Posterior vena cava (tissue), 2 donors: ENCODE measurements at regions of chr15 and their contacts with region 1.

Region 1: GRCh38 chr15:79028411-79028964 is 62.1 kb downstream of the RASGRF1 start:
- DNase-seq: peak; percentile 67

Region 2: DNA sequence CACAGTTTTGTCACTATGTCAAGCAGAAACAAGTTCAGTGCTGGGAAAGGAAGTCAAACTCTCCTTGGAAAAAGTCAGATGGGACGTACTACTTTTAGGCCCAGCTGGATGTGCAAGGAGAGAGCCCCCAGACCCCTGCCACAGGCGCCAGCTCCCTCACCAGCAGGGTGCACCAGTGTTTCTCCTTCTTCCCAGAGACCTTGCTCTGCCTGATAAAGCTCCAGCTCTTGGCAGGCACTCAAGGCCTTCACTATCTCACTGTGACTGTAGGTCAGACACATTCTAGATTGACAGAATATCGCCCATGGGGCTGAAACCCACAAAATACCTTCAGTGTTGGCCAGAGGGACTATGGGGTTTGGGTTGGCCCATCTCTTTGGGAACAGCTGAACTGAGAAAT is 332.6 kb before region 1 on chr15:
- intact Hi-C with region 1: no loop called
- DNase-seq: no peak

Region 3: DNA sequence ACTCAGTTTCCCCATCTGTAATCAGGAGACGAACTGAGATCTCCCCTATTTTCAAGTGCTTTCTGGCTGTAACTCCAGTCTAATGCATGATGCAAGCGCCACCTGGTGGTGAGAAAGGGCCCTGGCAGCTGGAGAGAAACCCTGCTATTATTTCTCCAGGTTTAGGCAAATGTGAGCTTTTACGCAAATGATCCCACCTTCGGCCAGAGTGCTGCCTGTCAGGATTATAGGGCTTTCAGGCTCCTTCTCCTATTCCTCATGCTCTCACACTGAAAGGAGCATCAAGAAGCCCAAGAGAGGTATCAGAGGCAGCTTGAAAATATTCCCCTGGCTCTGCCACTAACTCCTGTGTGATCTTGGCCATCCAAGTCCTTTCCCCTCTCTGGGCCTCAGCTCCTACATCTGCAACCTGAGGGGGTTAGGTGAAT is 156.0 kb after region 1 on chr15:
- intact Hi-C with region 1: loop called (anchors 5 to 10 kb)
- DNase-seq: peak; percentile 93